Tibial artery (tissue), 4 donors: ENCODE measurements at regions of chr11 and their contacts with region 1.

Region 1: DNA sequence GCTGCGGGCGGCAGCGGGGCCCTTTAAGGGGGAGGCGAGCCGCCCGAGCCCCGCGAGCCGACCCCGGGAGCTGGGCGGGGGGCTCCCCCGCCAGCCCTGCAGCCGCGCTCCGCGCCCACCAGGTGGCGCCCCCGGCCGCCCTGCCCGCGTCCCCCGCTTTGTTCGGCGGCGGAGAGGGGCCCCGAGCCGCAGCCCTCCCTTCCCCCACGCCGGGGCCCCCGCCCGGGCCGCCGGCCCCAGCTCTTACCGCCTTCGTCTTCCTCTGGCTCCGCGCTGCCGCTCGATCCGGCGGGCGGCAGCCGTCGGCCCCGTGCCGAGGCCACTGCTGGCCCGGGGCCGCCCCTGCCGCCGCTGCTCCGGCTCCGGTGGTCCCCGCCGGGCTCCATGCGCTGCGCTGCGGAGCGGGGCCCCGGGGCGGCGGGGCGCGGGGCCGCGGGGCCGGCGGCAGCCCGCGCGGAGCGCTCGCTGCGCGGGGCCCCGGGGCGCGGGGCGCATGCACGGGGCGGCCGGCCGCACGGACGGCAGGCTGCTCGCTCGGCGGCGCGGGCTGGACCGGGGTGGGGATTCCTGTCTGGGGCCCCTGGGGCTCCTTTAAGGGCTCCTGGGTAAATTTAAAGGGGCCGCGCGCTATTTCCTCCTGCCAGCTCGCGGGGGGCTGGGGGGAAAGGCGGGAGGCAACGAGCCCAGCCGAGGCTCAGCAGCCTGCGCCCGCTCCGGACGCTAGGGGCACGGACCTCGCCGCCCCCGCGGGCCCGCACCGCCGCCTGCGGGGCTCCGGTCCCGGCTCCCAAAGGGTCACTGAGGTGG is at the start of gene ZFTA:
- DNase-seq: peak in 1 of 2 donors; percentile 78
- H3K4me3 ChIP-seq: peak within 1 kb of the TSS; percentile 91 to 94
- H3K27ac ChIP-seq: peak within 1 kb of the TSS; percentile 89 to 90
- H3K4me1 ChIP-seq: peaks cover 0 to 42% (median 21%) of the 10 kb centered on the region in 4 donors
- H3K27me3 ChIP-seq: no peaks in the 10 kb centered on the region
- CTCF ChIP-seq: peak; percentile 50 to 86

Region 2: DNA sequence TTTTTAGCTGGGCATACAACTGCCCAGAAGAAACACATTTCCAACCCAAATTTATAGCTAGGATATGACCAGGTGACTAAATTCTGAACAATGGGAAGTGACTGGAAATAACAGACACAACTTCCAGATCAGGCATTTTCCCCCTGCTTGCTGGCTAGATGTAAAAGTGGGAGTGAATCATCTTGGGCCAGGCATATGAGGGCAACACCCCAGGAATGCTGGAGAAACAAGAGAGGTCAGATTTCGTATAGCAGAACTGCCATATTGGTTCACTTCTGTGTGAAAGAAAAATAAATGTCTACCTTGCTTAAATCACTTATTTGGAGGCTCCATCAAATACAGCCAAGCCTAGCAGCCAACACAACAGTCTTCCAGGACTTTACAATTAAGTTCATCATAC is 104.6 kb before region 1 on chr11:
- intact Hi-C with region 1: no loop called
- DNase-seq: no peak
- H3K4me3 ChIP-seq: no peak overlapping the region
- H3K27ac ChIP-seq: no peak overlapping the region
- H3K4me1 ChIP-seq: peaks cover 10 to 100% (median 63%) of the 10 kb centered on the region in 4 donors
- H3K27me3 ChIP-seq: no peaks in the 10 kb centered on the region
- CTCF ChIP-seq: no peak

Region 3: GRCh38 chr11:63719977-63720376 is 48.5 kb before region 1 on chr11:
- intact Hi-C with region 1: no loop called
- DNase-seq: no peak
- H3K4me3 ChIP-seq: no peak overlapping the region
- H3K27ac ChIP-seq: no peak overlapping the region
- H3K4me1 ChIP-seq: no peaks in the 10 kb centered on the region
- H3K27me3 ChIP-seq: no peaks in the 10 kb centered on the region
- CTCF ChIP-seq: no peak

Region 4: GRCh38 chr11:63813035-63813562 is 44.7 kb after region 1 on chr11 and contains the start of gene SPINDOC:
- intact Hi-C with region 1: loop called (anchors 2 kb)
- DNase-seq: peak; percentile 69 to 90
- H3K4me3 ChIP-seq: peak within 1 kb of the TSS; percentile 73 to 78
- H3K27ac ChIP-seq: peak within 1 kb of the TSS; percentile 71 to 80
- H3K4me1 ChIP-seq: peaks cover 0 to 32% (median 19%) of the 10 kb centered on the region in 4 donors
- H3K27me3 ChIP-seq: no peaks in the 10 kb centered on the region
- CTCF ChIP-seq: peak in 1 of 2 experiments; percentile 5

Region 5: DNA sequence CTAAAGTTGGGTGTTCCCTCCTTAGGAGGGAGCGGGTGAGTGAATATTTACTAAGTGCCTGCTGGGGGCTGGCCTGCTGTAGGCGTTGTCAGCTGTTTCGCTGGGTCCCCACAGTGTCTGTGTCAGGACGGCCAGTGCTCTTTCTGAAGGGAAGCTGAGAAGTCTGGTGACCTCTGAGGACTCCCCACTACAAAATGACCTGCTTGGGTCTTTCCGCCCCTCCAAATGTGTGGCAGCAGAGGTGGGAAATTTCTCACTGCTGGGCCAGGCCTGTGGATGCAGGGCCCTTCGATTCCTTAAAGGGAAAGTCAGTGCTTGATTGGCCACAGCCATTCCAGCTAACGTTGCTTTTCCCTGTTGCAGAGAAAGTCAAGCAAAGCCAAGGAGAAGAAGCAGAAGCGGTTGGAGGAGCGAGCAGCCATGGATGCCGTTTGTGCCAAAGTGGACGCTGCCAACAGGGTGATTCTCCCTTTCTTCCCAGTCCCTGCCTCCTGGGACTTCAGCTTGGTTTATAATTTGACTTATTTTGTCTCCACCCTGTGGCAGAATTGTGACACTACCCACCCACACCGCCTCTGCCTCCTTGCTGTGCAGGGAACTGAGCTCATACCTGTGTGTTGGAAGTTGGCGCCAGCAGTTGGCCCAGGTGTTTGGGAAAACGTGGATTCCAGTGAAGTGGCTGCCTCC is 177.2 kb after region 1 on chr11:
- intact Hi-C with region 1: loop called (anchors 5 kb)
- DNase-seq: peak; percentile 68 to 90
- H3K4me3 ChIP-seq: peak overlapping the region; percentile 3 to 16
- H3K27ac ChIP-seq: peak overlapping the region; percentile 45 to 86
- H3K4me1 ChIP-seq: peaks cover 0 to 19% (median 9%) of the 10 kb centered on the region in 4 donors
- H3K27me3 ChIP-seq: no peaks in the 10 kb centered on the region
- CTCF ChIP-seq: peak; percentile 78 to 95